Heart right ventricle (tissue), 16 donors: ENCODE measurements at regions of chr20 and their contacts with region 1.

Region 1: DNA sequence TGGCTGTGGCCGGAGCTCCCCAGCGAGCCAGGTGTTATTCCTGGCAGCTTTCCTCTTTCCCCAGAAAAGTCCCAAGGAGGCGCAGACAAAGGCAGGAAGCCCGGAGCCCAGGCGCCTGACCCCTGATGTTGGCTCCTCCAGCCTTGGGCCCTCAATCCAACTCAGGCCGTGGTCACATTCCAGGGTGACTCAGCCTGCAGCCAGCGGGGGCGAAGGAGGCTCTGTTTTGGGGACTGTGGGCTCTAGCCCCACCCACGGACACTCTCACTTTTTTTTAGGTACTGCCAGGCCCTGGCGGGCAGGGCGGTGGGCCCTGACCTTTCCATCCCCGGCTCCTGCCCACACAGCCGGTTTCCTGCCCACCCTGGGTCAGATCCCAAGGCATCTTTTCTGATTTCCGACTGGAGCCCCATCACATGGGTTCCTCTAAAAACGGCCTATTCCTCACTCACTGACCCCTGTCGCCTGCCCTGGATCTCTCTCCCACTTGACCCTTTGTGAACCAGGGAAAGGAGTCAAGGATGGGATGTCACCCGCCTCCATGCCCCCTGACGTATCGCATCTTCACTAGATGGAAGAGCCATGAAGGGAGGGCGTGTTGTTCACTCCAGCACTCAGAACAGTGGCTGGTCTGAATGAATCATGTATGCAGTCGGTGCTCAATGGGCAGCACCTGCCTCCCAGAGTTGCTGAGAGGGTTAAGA is 5.5 kb downstream of the PTGIS start:
- DNase-seq: peak; percentile 75 to 89
- ATAC-seq: peak; percentile 90 to 96 (median 94)
- H3K4me3 ChIP-seq: peak overlapping the region in 2 of 10 donors; percentile 9 to 13
- H3K27ac ChIP-seq: peak overlapping the region; percentile 38 to 90 (median 70)
- H3K4me1 ChIP-seq: peaks cover 8 to 81% (median 24%) of the 10 kb centered on the region in 9 donors
- H3K27me3 ChIP-seq: peaks cover 0 to 24% (median 2%) of the 10 kb centered on the region in 7 donors
- CTCF ChIP-seq: no peak

Region 2: GRCh38 chr20:49411221-49411925 is 151.1 kb before region 1 on chr20:
- intact Hi-C with region 1: no loop called
- DNase-seq: no peak
- ATAC-seq: no peak
- H3K4me3 ChIP-seq: no peak overlapping the region
- H3K27ac ChIP-seq: no peak overlapping the region
- H3K4me1 ChIP-seq: peaks cover 0 to 16% (median 0%) of the 10 kb centered on the region in 9 donors
- H3K27me3 ChIP-seq: peaks cover 0 to 17% (median 0%) of the 10 kb centered on the region in 7 donors
- CTCF ChIP-seq: no peak

Region 3: GRCh38 chr20:49594143-49594930 is 31.9 kb after region 1 on chr20:
- intact Hi-C with region 1: loop called in 1 of 10 experiments (anchors 5 kb)
- DNase-seq: peak; percentile 48 to 67
- ATAC-seq: peak; percentile 58 to 84 (median 73)
- H3K4me3 ChIP-seq: peak overlapping the region in 1 of 10 donors; percentile 22
- H3K27ac ChIP-seq: peak overlapping the region; percentile 16 to 81 (median 71)
- H3K4me1 ChIP-seq: peaks cover 5 to 61% (median 30%) of the 10 kb centered on the region in 9 donors
- H3K27me3 ChIP-seq: no peaks in the 10 kb centered on the region
- CTCF ChIP-seq: no peak

Region 4: GRCh38 chr20:49603209-49603627 is 40.8 kb after region 1 on chr20:
- intact Hi-C with region 1: loop called in 1 of 10 experiments (anchors 5 kb)
- DNase-seq: peak in 1 of 2 donors; percentile 37
- ATAC-seq: peak in 7 of 8 donors; percentile 45 to 69 (median 59)
- H3K4me3 ChIP-seq: no peak overlapping the region
- H3K27ac ChIP-seq: peak overlapping the region in 3 of 10 donors; percentile 14 to 44 (median 20)
- H3K4me1 ChIP-seq: peaks cover 0 to 15% (median 0%) of the 10 kb centered on the region in 9 donors
- H3K27me3 ChIP-seq: peaks cover 0 to 9% (median 2%) of the 10 kb centered on the region in 7 donors
- CTCF ChIP-seq: peak in 7 of 9 donors; percentile 24 to 60 (median 37)